Motor neuron (in vitro differentiated cells): ENCODE measurements at regions of chr14 and their contacts with region 1.

Region 1: GRCh38 chr14:64636208-64636979 is 67.8 kb upstream of the PLEKHG3 start:
- ATAC-seq: peak; percentile 73 to 90 (median 80)
- H3K4me3 ChIP-seq: no peak overlapping the region
- H3K27ac ChIP-seq: no peak overlapping the region
- H3K4me1 ChIP-seq: peaks cover 0 to 3% of the 10 kb centered on the region in 2 donors

Region 2: DNA sequence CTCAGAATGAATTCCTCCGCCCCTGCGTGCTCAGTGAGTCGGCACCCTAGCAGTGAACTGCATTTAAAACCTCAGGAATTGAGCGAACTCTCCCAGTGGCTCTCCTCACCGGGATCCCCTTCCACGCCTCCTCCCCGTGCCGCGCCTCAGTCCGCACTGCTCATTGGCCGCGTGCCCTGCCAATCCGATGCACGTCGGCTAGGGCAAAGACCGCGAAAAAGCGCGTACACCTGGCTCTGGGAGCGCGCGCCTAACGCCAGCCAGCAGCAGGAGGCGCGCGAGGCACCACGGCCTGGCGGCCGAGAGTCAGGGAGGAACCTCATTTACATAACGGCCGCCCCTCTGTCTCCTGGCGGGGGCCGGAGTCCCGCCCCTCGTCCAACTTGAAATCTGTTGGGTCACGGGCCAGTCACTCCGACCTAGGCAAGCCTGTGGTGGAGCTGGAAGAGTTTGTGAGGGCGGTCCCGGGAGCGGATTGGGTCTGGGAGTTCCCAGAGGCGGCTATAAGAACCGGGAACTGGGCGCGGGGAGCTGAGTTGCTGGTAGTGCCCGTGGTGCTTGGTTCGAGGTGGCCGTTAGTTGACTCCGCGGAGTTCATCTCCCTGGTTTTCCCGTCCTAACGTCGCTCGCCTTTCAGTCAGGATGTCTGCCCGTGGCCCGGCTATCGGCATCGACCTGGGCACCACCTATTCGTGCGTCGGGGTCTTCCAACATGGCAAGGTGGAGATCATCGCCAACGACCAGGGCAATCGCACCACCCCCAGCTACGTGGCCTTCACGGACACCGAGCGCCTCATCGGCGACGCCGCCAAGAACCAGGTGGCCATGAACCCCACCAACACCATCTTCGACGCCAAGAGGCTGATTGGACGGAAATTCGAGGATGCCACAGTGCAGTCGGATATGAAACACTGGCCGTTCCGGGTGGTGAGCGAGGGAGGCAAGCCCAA is 95.9 kb before region 1 on chr14 and contains the start of gene HSPA2:
- in situ Hi-C with region 1: loop called in 3 of 9 experiments (anchors 10 to 25 kb)
- ATAC-seq: peak; percentile 19 to 97 (median 94)
- H3K4me3 ChIP-seq: peak within 1 kb of the TSS in 4 of 5 donors; percentile 36 to 56 (median 45)
- H3K27ac ChIP-seq: peak within 1 kb of the TSS in 1 of 2 donors; percentile 44
- H3K4me1 ChIP-seq: no peaks in the 10 kb centered on the region
- total RNA-seq, gene HSPA2: 1.3 to 25.7 (median 5.7) TPM